ENCODE measurements at regions of chr3 and their contacts with region 1.

Region 1: DNA sequence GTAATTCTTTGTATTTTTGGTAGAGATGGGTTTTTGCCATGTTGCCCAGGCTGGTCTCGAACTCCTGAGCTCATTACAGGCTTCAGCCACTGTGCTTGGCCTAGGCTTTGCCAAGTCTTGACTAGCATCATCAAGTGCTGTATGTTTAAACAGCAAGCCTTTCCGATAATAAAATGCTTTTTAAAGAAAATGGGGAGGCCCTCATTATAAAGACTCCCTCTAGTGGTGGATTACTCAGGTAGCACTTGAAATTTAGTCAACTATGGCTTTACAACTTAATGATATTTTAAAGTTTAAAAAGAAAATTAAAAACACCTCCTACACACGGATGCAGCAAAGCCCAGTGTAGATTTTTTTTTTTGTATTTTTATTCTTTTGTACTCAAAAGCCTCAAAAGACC is 213.6 kb downstream of the GAP43 start:
- DNase-seq: peak; percentile 27
- H3K4me3 Mint-ChIP-seq: no peak overlapping the region
- H3K27ac Mint-ChIP-seq: no peak overlapping the region
- H3K4me1 Mint-ChIP-seq: peaks cover 6% of the 10 kb centered on the region
- H3K27me3 Mint-ChIP-seq: no peaks in the 10 kb centered on the region
- CTCF ChIP-seq: peak; percentile 60

Region 2: GRCh38 chr3:115814778-115815380 is 22.1 kb before region 1 on chr3:
- CTCF ChIA-PET with region 1: interaction called, 31 read pairs
- POLR2A ChIA-PET with region 1: interaction called, 3 read pairs
- intact Hi-C with region 1: no loop called
- DNase-seq: peak; percentile 85
- H3K4me3 Mint-ChIP-seq: no peak overlapping the region
- H3K27ac Mint-ChIP-seq: no peak overlapping the region
- H3K4me1 Mint-ChIP-seq: no peaks in the 10 kb centered on the region
- H3K27me3 Mint-ChIP-seq: no peaks in the 10 kb centered on the region
- CTCF ChIP-seq: peak; percentile 81

Region 3: GRCh38 chr3:115825046-115825445 is 11.9 kb before region 1 on chr3:
- CTCF ChIA-PET with region 1: interaction called, 31 read pairs
- POLR2A ChIA-PET with region 1: no interaction called
- intact Hi-C with region 1: no loop called
- DNase-seq: peak; percentile 36
- H3K4me3 Mint-ChIP-seq: no peak overlapping the region
- H3K27ac Mint-ChIP-seq: no peak overlapping the region
- H3K4me1 Mint-ChIP-seq: peaks cover 16% of the 10 kb centered on the region
- H3K27me3 Mint-ChIP-seq: no peaks in the 10 kb centered on the region
- CTCF ChIP-seq: no peak

Region 4: GRCh38 chr3:115852278-115852677 is 15.3 kb after region 1 on chr3:
- CTCF ChIA-PET with region 1: interaction called, 14 read pairs
- POLR2A ChIA-PET with region 1: interaction called, 3 read pairs
- intact Hi-C with region 1: no loop called
- DNase-seq: no peak
- H3K4me3 Mint-ChIP-seq: no peak overlapping the region
- H3K27ac Mint-ChIP-seq: no peak overlapping the region
- H3K4me1 Mint-ChIP-seq: no peaks in the 10 kb centered on the region
- H3K27me3 Mint-ChIP-seq: no peaks in the 10 kb centered on the region
- CTCF ChIP-seq: no peak

Region 5: GRCh38 chr3:115861166-115861733 is 24.3 kb after region 1 on chr3:
- CTCF ChIA-PET with region 1: interaction called, 14 read pairs
- POLR2A ChIA-PET with region 1: no interaction called
- intact Hi-C with region 1: no loop called
- DNase-seq: no peak
- H3K4me3 Mint-ChIP-seq: no peak overlapping the region
- H3K27ac Mint-ChIP-seq: no peak overlapping the region
- H3K4me1 Mint-ChIP-seq: no peaks in the 10 kb centered on the region
- H3K27me3 Mint-ChIP-seq: no peaks in the 10 kb centered on the region
- CTCF ChIP-seq: no peak